Sigmoid colon (tissue), 7 donors: ENCODE measurements at regions of chr20 and their contacts with region 1.

Region 1: DNA sequence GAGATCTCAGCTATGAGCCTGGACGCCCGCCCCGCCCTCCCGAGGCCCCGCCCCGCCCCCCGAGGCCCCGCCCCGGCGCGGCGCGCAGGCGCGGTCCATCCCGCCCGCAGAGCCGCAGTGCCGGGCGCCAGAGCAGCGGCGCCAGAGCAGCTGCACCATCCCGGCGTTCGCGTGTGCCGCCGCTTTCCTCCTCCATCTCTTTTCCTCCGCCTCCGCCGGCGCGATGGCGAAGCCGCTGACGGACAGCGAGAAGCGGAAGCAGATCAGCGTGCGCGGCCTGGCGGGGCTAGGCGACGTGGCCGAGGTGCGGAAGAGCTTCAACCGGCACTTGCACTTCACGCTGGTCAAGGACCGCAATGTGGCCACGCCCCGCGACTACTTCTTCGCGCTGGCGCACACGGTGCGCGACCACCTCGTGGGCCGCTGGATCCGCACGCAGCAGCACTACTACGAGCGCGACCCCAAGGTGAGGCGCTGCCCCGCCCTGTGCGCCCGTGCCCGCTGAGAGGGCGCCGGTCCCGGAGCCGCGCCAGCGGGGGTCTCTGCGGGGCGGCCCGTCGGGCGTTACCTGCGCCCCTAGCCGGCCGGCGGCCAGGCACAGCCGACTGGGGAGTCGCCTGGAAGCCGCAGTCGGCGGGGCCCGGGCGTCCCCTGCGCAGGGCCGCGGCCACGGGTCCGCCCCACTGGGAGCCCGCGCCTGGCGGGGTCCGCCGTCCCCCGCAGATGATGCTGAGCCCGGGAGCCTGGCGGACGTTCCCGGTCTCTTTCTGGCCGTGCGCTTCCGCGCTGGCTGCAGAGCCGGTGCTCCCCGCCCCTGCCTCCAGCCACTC is at the start of gene PYGB:
- DNase-seq: peak; percentile 87
- H3K4me3 ChIP-seq: peak within 1 kb of the TSS; percentile 68 to 87 (median 78)
- H3K27ac ChIP-seq: peak within 1 kb of the TSS; percentile 95 to 97 (median 96)
- H3K4me1 ChIP-seq: peaks cover 0 to 50% (median 42%) of the 10 kb centered on the region in 4 donors
- H3K27me3 ChIP-seq: no peaks in the 10 kb centered on the region
- CTCF ChIP-seq: no peak
- EP300 ChIP-seq: no peak
- POLR2A ChIP-seq: peak; percentile 95
- total RNA-seq, gene PYGB: 147 to 317 (median 226) TPM

Region 2: DNA sequence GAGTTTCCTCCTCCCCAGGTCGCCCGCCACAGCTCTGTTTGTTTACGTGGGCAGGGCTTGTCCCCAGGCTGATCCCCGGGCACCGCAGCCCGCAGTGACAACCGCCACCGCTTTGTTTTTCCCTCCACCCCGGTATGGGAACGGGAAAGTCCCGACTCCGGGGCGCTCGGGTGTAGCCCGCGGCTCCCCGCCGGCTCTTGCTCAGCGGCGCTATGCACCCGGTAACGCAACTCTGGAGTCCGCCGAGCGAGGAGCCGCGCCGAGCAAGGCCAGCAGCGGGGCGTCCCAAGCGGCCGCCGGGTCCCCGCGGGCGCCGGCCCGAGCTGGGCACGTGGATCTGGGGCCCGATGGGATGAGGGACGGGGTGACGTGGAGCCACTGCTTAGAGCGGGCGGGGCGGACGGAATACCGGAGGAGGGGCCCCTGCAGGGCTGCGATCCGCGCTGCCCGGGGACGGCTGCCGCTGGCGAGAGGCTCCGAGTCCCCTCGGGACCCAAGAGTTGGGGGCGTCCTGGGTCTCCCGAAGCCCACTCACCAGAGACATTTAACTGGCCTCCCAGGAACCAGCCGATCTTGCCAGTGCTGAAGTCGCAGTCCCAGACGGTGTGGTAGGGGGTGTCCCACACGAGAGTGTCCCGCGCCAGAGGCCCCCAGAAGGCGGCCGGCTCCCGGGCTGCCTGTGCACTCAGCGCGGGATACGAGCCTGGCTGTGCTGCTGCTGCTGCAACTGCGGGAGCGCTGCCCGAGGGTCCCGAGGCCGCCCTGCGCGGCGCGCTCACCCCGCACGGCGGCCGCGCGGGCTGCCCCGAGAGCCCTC is 190.7 kb before region 1 on chr20:
- intact Hi-C with region 1: loop called (anchors 5 kb)
- DNase-seq: peak; percentile 90
- H3K4me3 ChIP-seq: peak overlapping the region; percentile 75 to 88 (median 80)
- H3K27ac ChIP-seq: peak overlapping the region; percentile 93 to 97 (median 94)
- H3K4me1 ChIP-seq: peaks cover 2 to 62% (median 58%) of the 10 kb centered on the region in 4 donors
- H3K27me3 ChIP-seq: no peaks in the 10 kb centered on the region
- CTCF ChIP-seq: no peak
- EP300 ChIP-seq: no peak
- POLR2A ChIP-seq: peak; percentile 36 to 47

Region 3: DNA sequence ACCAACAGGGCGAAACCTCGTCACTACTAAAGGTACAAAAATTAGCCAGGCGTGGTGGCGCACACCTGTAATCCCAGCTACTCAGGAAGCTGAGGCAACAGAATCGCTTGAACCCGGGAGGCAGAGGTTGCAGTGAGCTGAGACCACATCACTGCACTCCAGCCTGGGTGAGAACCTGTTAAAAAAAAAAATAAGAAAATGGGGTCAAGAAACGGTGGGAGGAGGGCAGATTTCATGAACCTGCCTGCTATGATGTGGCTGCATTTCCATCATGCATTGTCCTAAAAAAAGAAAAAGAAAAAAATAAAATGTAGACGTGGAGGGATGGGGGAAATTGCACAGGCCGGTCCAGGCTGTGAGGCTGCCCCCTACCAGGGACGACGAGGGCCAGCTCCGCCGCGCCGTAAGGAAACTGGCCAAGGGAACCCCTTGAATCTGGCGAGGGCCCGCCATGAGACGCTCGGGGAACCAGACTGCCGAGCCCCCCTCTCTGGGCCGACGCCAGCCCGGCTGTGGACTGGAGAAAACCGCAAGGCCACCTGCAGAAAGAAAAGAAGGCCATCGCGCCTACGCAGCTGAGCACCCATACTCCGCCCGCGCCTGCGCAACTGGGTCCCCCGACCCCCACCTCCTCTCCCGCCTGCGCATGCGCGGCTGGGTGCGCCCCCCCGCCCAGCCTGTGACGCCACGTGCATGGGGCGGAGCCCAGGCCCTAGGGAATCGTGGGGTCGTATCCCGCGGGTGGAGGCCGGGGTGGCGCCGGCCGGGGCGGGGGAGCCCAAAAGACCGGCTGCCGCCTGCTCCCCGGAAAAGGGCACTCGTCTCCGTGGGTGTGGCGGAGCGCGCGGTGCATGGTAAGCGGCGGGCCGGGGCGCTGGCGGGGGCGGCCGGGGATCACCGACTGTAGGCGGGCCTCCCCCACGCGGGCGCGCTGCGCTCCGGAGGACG is 52.9 kb before region 1 on chr20 and contains the start of gene ENTPD6:
- intact Hi-C with region 1: loop called (anchors 2 kb)
- DNase-seq: peak; percentile 97
- H3K4me3 ChIP-seq: peak within 1 kb of the TSS; percentile 82 to 96 (median 92)
- H3K27ac ChIP-seq: peak within 1 kb of the TSS; percentile 87 to 92 (median 90)
- H3K4me1 ChIP-seq: peaks cover 0 to 53% (median 44%) of the 10 kb centered on the region in 4 donors
- H3K27me3 ChIP-seq: no peaks in the 10 kb centered on the region
- CTCF ChIP-seq: peak in 2 of 4 experiments; percentile 15 to 32
- EP300 ChIP-seq: peak in 1 of 4 donors; percentile 45
- POLR2A ChIP-seq: peak; percentile 82 to 85
- total RNA-seq, gene ENTPD6: 26.0 to 48.2 (median 37.2) TPM

Region 4: DNA sequence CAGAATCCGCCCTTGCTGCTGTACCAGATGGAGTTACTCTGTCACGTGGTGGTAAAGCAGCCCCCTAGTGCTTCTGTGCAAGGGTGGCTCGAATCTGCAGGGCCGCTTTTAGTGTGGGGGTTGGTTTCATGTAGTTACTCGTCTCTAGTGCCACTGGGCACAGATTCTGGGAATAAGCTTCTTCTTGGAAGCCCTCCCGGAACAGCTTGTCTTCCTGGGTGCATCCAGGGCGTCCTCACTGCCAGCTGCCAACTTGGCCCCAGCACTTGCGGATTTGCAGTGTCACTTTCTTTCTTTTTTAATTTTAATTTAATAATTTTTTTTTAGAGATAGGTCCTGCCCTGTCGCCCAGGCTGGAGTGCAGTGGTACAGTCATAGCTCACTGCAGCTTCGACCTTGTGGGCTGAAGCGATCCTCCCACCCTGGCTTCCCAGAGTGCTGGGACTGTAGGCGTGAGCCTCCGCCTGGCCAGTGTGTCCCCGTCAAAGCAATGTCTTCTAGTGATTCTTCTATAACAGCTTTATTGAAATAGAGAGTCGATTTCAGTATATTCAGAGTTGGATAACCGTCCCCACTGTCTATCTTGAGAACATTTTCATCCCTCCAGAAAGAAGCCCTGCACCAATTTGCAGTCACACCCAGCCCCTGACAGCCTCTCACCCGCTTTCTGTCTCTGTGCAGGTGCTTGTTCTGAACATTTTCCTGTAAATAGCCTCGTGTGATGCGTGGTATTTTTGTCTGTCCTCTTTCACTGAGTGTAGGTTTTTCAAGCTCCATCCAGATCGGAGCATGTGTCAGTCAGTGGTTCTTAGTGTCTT is 25.6 kb after region 1 on chr20:
- intact Hi-C with region 1: loop called (anchors 2 kb)
- DNase-seq: peak; percentile 86
- H3K4me3 ChIP-seq: no peak overlapping the region
- H3K27ac ChIP-seq: peak overlapping the region; percentile 76 to 88 (median 80)
- H3K4me1 ChIP-seq: peaks cover 0 to 53% (median 41%) of the 10 kb centered on the region in 4 donors
- H3K27me3 ChIP-seq: no peaks in the 10 kb centered on the region
- CTCF ChIP-seq: no peak
- EP300 ChIP-seq: peak in 3 of 4 donors; percentile 32 to 84 (median 68)
- POLR2A ChIP-seq: no peak

Region 5: DNA sequence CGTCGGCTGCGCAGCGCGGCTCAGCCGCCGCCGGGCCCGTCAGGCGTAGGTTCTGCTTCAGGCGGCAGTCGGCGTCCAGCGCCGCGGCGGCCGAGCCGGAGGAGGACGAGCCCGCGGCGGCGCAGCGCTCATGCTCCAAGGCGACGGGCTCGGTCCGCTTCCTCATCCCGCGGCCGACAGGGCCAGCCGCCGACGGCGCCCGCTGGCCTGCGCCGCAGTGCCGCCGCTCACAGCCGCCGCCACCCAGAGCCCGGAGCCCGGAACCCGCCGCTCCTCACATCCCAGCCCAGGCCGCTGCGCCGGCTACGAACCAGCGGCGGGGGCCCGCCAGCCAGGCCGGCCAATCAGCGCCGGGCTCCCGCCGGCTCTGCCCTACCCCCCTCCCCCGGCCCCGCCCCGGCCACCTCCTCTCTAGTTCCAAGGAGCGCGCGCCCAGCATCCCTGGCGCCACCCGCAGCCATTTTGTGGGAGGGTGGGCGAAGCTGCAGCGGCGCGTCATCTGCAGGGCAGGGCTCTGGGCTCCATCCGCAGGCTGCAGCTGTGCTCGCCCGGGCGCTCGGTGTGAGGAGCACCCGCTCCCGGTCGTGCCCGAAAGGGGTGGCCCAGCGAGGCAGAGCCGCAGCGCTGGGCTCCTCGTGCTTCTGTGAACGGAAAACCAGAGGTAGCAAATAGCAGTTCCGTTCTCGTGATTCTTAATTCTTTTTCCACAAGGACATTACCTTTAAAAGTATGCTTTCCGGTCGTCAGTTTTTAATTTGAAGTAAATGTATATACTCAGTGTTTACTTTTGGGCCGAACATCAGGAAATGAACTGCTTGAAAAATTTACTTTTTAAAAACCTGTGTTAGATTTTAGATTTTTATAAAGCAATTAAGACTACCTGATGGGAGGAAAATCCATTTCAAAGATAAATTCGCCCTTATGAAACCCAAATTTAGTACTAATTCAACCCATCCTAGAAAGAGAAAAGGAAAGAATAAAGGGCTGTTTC is 142.7 kb after region 1 on chr20 and contains the start of gene ABHD12:
- intact Hi-C with region 1: loop called (anchors 2 kb)
- DNase-seq: peak; percentile 98
- H3K4me3 ChIP-seq: peak within 1 kb of the TSS; percentile 71 to 95 (median 76)
- H3K27ac ChIP-seq: peak within 1 kb of the TSS; percentile 90 to 97 (median 94)
- H3K4me1 ChIP-seq: peaks cover 0 to 17% (median 13%) of the 10 kb centered on the region in 4 donors
- H3K27me3 ChIP-seq: no peaks in the 10 kb centered on the region
- CTCF ChIP-seq: no peak
- EP300 ChIP-seq: no peak
- POLR2A ChIP-seq: peak; percentile 22 to 70
- total RNA-seq, gene ABHD12: 18.9 to 39.6 (median 34.9) TPM

Region 6: DNA sequence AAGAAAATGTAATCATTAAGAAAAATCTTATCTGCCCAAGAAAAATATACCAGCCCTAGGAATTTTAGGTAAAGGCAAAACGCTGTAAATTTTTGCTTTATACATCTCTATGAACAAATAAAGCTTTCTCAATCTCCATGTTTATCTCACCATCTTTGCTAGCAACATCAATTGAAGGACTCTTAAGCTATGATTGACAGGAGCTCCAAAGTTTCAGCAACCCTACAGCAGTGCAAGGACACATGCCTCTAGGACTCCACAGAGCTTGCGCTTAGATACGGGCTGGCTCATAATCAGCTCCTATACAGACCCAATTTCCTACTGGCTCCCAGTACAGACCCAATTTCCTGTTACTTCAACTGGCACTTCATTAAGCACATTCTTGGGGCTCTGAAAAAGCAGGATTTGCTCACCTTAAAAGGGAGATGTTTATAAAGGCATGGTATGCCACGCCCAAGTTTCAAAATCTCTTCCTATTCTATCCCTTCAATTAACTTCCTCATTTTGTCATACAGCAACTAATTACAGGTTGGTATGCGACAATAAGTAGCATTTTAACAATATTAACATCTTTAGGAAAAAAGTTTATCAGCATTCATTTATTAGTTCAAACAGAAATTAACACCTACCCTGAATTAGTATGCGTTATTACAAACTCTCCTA is 371.5 kb after region 1 on chr20:
- intact Hi-C with region 1: no loop called
- DNase-seq: no peak
- H3K4me3 ChIP-seq: no peak overlapping the region
- H3K27ac ChIP-seq: no peak overlapping the region
- H3K4me1 ChIP-seq: peaks cover 0 to 24% (median 11%) of the 10 kb centered on the region in 4 donors
- H3K27me3 ChIP-seq: no peaks in the 10 kb centered on the region
- CTCF ChIP-seq: no peak
- EP300 ChIP-seq: no peak
- POLR2A ChIP-seq: no peak